ENCODE measurements at regions of chrX and their contacts with region 1.

Region 1: DNA sequence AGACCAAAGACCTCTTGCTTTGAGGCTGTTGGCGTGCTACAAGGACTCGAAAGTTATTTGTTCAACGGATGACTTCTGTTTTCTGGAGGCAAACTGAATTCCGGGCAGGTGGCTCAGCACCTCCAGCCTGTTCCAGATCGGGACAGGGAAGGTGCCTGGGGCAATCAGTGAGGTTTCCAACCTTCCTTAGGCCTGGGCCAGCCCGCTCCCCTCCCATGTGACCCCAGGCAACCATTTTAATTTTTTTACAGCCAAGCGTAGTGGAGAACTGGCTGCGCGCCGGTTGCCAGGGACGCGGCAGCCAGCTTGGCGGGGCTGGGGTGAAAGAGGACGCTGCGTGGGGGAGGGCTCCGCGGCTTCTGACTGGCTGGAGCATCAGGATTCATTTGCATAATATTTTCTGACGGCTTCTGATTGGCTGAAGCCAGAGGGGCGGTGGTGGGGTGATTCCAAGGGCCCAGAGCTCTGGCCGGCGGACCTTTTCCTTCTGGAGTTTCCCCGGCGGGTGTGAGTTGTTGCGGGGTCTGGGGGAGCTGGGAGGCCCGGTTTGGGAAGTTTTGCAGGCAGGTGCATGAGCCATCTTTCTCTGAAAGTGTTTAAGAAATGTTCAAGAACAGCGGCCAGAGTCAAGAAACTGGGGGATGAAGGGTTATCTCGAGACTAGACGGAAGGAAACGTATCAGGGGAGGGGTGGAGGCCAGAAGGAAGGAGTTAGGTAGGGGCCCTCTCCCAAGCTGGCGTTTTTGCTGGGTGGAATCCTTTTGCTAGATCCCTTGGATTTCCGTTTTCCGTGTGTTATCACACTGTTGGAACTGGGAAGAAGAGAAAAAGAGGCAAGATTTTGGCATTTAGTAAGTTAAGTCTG is at the start of gene MID1IP1:
- DNase-seq: peak; percentile 89 to 91
- H3K4me3 ChIP-seq: peak within 1 kb of the TSS; percentile 51
- H3K4me3 Mint-ChIP-seq: peak within 1 kb of the TSS; percentile 96
- H3K27ac Mint-ChIP-seq: peak within 1 kb of the TSS; percentile 99
- H3K4me1 ChIP-seq: no peaks in the 10 kb centered on the region; the same call in 1 of the 2 replicates
- H3K4me1 Mint-ChIP-seq: no peaks in the 10 kb centered on the region
- H3K27me3 ChIP-seq: no peaks in the 10 kb centered on the region
- H3K27me3 Mint-ChIP-seq: no peaks in the 10 kb centered on the region
- CTCF ChIP-seq: no peak
- total RNA-seq, gene MID1IP1: 35.5 and 40.6 TPM in 2 replicates

Region 2: DNA sequence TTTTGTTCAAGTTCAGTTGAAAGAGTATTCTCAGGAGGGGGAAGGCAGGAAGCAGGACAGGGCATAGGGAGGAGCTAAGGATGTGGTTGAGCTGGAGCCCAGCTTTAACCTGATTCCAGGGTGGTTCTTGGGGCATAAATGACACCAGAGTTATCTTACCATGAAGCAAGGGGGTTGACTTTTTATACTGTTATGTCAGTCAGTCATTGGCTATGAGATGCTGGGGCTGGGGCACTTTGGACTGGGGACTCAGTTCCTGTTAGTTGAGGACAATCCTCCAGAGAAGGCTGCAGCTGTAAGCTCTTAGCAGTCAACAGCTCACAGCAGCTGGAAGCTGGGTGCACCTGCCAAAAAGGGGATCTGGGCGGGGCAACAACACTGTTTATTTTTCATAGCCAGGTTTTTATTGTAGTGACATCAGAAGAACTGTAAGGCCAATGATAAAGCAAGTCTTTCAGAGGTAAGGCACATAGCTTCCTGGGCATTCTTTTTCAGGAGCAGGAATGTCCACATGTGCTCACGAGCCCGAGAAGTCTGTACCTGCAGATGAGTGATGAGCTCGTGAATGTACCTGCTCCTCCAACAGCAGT is 78.5 kb after region 1 on chrX:
- CTCF ChIA-PET with region 1: no interaction called
- POLR2A ChIA-PET with region 1: no interaction called
- intact Hi-C with region 1: no loop called
- DNase-seq: no peak
- H3K4me3 ChIP-seq: no peak overlapping the region
- H3K4me3 Mint-ChIP-seq: no peak overlapping the region
- H3K27ac Mint-ChIP-seq: no peak overlapping the region
- H3K4me1 ChIP-seq: no peaks in the 10 kb centered on the region
- H3K4me1 Mint-ChIP-seq: no peaks in the 10 kb centered on the region
- H3K27me3 ChIP-seq: no peaks in the 10 kb centered on the region
- H3K27me3 Mint-ChIP-seq: no peaks in the 10 kb centered on the region
- CTCF ChIP-seq: no peak

Region 3: GRCh38 chrX:38985375-38985774 is 184.2 kb after region 1 on chrX:
- CTCF ChIA-PET with region 1: no interaction called
- POLR2A ChIA-PET with region 1: no interaction called
- intact Hi-C with region 1: loop called (anchors 5 kb)
- DNase-seq: no peak
- H3K4me3 ChIP-seq: no peak overlapping the region
- H3K4me3 Mint-ChIP-seq: no peak overlapping the region
- H3K27ac Mint-ChIP-seq: no peak overlapping the region
- H3K4me1 ChIP-seq: peaks cover 5% of the 10 kb centered on the region
- H3K4me1 Mint-ChIP-seq: peaks cover 15% of the 10 kb centered on the region
- H3K27me3 ChIP-seq: no peaks in the 10 kb centered on the region
- H3K27me3 Mint-ChIP-seq: no peaks in the 10 kb centered on the region
- CTCF ChIP-seq: no peak

Region 4: GRCh38 chrX:39017081-39017480 is 215.9 kb after region 1 on chrX:
- CTCF ChIA-PET with region 1: no interaction called
- POLR2A ChIA-PET with region 1: interaction called, 3 read pairs
- intact Hi-C with region 1: loop called (anchors 1 kb)
- DNase-seq: no peak
- H3K4me3 ChIP-seq: no peak overlapping the region
- H3K4me3 Mint-ChIP-seq: peak overlapping the region; percentile 46
- H3K27ac Mint-ChIP-seq: peak overlapping the region; percentile 65
- H3K4me1 ChIP-seq: peaks cover 34% of the 10 kb centered on the region
- H3K4me1 Mint-ChIP-seq: peaks cover 18% of the 10 kb centered on the region
- H3K27me3 ChIP-seq: no peaks in the 10 kb centered on the region
- H3K27me3 Mint-ChIP-seq: no peaks in the 10 kb centered on the region
- CTCF ChIP-seq: no peak

Region 5: GRCh38 chrX:39149761-39150160 is 348.5 kb after region 1 on chrX:
- CTCF ChIA-PET with region 1: interaction called, 3 read pairs
- POLR2A ChIA-PET with region 1: no interaction called
- intact Hi-C with region 1: loop called (anchors 1 kb)
- DNase-seq: peak in 1 of 2 experiments; percentile 46
- H3K4me3 ChIP-seq: no peak overlapping the region
- H3K4me3 Mint-ChIP-seq: no peak overlapping the region
- H3K27ac Mint-ChIP-seq: no peak overlapping the region
- H3K4me1 ChIP-seq: no peaks in the 10 kb centered on the region
- H3K4me1 Mint-ChIP-seq: no peaks in the 10 kb centered on the region
- H3K27me3 ChIP-seq: no peaks in the 10 kb centered on the region
- H3K27me3 Mint-ChIP-seq: peaks cover 2% of the 10 kb centered on the region
- CTCF ChIP-seq: peak; percentile 40 to 47

Region 6: GRCh38 chrX:39336671-39337311 is 535.6 kb after region 1 on chrX:
- CTCF ChIA-PET with region 1: no interaction called
- POLR2A ChIA-PET with region 1: no interaction called
- intact Hi-C with region 1: no loop called
- DNase-seq: no peak
- H3K4me3 ChIP-seq: no peak overlapping the region
- H3K4me3 Mint-ChIP-seq: no peak overlapping the region
- H3K27ac Mint-ChIP-seq: no peak overlapping the region
- H3K4me1 ChIP-seq: no peaks in the 10 kb centered on the region
- H3K4me1 Mint-ChIP-seq: no peaks in the 10 kb centered on the region
- H3K27me3 ChIP-seq: no peaks in the 10 kb centered on the region
- H3K27me3 Mint-ChIP-seq: no peaks in the 10 kb centered on the region
- CTCF ChIP-seq: no peak